ENCODE measurements at regions of chr18 and their contacts with region 1.

Region 1: GRCh38 chr18:12287684-12288402 is 20.2 kb upstream of the TUBB6 start:
- DNase-seq: no peak
- ATAC-seq: no peak
- H3K4me3 Mint-ChIP-seq: peak overlapping the region; percentile 57
- H3K27ac Mint-ChIP-seq: no peak overlapping the region
- H3K4me1 Mint-ChIP-seq: peaks cover 6% of the 10 kb centered on the region
- H3K27me3 Mint-ChIP-seq: peaks cover 29% of the 10 kb centered on the region
- CTCF ChIP-seq: no peak

Region 2: GRCh38 chr18:12005538-12006487 is 282.0 kb before region 1 on chr18:
- CTCF ChIA-PET with region 1: no interaction called
- POLR2A ChIA-PET with region 1: no interaction called
- intact Hi-C with region 1: no loop called
- DNase-seq: no peak
- ATAC-seq: no peak
- H3K4me3 Mint-ChIP-seq: no peak overlapping the region
- H3K27ac Mint-ChIP-seq: no peak overlapping the region
- H3K4me1 Mint-ChIP-seq: peaks cover 4% of the 10 kb centered on the region
- H3K27me3 Mint-ChIP-seq: no peaks in the 10 kb centered on the region
- CTCF ChIP-seq: no peak

Region 3: GRCh38 chr18:12256951-12257350 is 30.9 kb before region 1 on chr18:
- CTCF ChIA-PET with region 1: no interaction called
- POLR2A ChIA-PET with region 1: no interaction called
- intact Hi-C with region 1: no loop called
- DNase-seq: no peak
- ATAC-seq: no peak
- H3K4me3 Mint-ChIP-seq: no peak overlapping the region
- H3K27ac Mint-ChIP-seq: no peak overlapping the region
- H3K4me1 Mint-ChIP-seq: no peaks in the 10 kb centered on the region
- H3K27me3 Mint-ChIP-seq: peaks cover 53% of the 10 kb centered on the region
- CTCF ChIP-seq: no peak

Region 4: DNA sequence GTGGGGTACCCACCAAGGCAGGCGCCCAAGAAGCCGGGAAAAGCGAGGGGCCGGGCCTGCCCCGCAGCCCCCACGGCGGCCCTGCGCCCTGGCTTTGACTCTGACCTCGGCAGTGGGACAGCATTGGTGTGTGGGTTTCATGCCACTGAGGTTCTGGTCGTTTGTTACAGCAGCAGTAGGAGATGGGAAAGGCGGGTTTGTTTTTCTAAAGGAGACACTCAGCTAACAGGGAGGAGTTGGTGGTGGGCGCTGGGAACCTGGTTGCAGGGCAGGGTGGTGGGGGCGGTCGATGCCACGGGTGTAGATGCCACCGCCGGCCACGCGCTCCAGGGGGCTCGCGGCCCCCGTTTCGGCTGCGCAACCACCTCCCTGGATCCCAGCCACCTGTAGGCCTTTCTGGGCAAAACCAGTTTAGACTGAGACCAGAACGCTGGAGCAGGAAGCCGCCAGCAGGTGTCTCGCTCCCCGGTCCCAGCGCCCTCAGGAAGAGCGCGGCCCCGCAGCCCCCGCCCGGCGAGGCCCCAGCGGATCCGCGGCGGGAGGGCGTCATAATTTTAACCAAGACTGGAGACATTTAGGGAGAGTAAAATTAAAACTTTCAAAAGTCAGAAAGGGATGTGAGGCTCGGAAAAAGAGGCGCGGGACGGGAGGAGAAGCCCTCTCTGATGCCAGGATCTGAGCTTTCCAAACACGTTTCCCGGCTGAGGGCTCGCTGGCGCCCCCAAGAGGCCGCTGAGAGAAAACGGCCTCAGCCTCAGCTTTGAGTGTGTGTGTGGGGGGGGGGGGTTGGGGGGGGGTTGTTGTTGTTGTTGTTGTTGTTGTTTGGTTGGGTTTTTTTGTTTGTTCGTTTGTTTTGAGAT is 16.2 kb before region 1 on chr18:
- CTCF ChIA-PET with region 1: interaction called, 3 read pairs
- POLR2A ChIA-PET with region 1: interaction called, 12 read pairs
- intact Hi-C with region 1: no loop called
- DNase-seq: peak; percentile 50
- ATAC-seq: peak; percentile 82
- H3K4me3 Mint-ChIP-seq: peak overlapping the region; percentile 73
- H3K27ac Mint-ChIP-seq: no peak overlapping the region
- H3K4me1 Mint-ChIP-seq: peaks cover 2% of the 10 kb centered on the region
- H3K27me3 Mint-ChIP-seq: peaks cover 13% of the 10 kb centered on the region
- CTCF ChIP-seq: no peak

Measured in activated B cell treated with CpG ODN at 0.5 μM for 24 hours (primary cell).